ENCODE measurements at regions of chr6 and their contacts with region 1.

Region 1: DNA sequence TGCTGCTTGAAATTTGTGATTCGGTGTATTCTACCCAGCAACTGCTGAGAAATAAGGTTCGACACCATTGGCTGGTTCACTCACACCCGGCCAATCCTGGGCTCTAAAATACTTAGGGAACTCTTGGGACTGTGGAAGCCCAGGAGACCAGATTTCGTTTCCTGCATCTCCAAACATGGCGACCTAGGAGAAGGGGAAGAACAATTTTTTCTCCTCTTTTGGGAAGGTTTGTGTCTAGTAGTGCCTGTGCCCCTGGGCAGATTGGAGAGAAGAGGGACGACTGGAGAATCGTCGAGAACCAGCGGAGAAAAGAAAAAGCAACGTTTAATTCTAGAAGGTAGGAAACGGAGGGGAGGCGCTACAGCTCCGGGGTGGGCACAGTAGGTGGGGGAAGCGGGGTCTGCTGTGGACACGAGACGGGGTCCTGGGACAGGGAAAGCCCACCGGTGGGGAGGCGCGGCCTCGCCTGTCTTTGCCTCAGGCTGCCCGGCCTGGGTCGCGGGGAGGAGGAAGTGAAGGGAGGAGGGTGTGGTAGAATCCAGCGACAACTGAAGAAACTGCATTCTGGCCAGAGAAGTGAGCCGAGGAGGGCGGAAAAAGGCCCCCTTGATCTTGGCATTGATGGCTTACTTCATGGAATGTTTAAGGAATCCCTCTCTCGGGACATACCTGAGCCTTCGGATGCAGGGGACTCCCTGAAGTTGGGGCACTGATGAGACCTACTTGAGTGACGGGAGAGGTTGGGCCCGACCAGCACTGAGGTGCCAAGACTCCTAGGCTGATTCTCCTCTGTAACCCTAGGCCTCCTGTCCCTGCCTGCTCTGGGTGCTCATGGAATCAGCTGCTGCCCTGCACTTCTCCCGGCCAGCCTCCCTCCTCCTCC is at the start of gene BTN2A1:
- DNase-seq: peak in 8 of 9 donors; percentile 59 to 86 (median 78)
- ATAC-seq: peak; percentile 99
- H3K4me3 ChIP-seq: peak within 1 kb of the TSS; percentile 93
- H3K4me3 Mint-ChIP-seq: peak within 1 kb of the TSS; percentile 90 to 100 (median 98)
- H3K27ac ChIP-seq: peak within 1 kb of the TSS; percentile 81
- H3K27ac Mint-ChIP-seq: peak within 1 kb of the TSS; percentile 89 to 99 (median 94)
- H3K4me1 ChIP-seq: peaks cover 27 to 38% of the 10 kb centered on the region in 2 donors
- H3K4me1 Mint-ChIP-seq: peaks cover 43 to 75% (median 60%) of the 10 kb centered on the region in 7 donors
- H3K27me3 ChIP-seq: no peaks in the 10 kb centered on the region
- H3K27me3 Mint-ChIP-seq: no peaks in the 10 kb centered on the region
- total RNA-seq, gene BTN2A1: 29.0 to 54.6 (median 37.2) TPM

Region 2: DNA sequence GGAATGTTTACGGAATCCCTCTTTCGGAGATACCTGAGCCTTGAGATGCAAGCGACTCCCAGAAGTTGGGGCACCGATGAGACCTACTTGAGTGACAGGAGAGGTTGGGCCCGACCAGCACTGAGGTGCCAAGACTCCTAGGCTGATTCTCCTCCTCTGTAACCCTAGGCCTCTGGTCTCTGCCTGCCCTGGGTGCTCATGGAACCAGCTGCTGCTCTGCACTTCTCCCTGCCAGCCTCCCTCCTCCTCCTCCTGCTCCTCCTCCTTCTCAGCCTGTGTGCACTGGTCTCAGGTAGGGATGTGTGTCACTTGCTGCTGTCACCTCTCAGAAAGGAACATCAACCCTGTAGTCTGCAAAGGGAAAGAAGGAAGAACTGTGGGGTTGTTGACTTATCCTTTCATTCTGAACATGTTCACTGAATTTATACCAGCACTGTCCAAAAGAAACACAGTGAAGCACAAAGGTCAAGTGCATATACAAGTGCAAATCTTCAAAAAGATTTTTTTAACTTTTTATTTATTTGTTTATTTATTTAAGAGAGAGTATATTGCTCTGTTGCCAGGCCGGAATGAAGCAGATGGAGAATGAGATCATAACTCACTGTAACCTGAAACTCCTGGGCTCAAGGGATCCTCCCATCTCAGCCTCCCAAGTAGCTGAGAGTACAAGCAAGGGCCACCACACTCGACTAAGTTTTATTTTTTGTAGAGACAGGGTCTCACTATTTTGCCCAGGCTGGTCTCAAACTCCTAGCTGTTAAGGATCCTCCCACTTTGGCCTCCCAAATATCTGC is 74.2 kb before region 1 on chr6:
- CTCF ChIA-PET with region 1: no interaction called
- POLR2A ChIA-PET with region 1: no interaction called
- intact Hi-C with region 1: loop called in 1 of 2 experiments (anchors 5 kb)
- DNase-seq: peak in 1 of 9 donors; percentile 20
- ATAC-seq: peak; percentile 9
- H3K4me3 ChIP-seq: peak overlapping the region; percentile 83
- H3K4me3 Mint-ChIP-seq: peak overlapping the region; percentile 91 to 100 (median 98)
- H3K27ac ChIP-seq: peak overlapping the region; percentile 96
- H3K27ac Mint-ChIP-seq: peak overlapping the region; percentile 81 to 99 (median 95)
- H3K4me1 ChIP-seq: peaks cover 8 to 16% of the 10 kb centered on the region in 2 donors
- H3K4me1 Mint-ChIP-seq: peaks cover 17 to 57% (median 33%) of the 10 kb centered on the region in 7 donors
- H3K27me3 ChIP-seq: no peaks in the 10 kb centered on the region
- H3K27me3 Mint-ChIP-seq: no peaks in the 10 kb centered on the region

Region 3: DNA sequence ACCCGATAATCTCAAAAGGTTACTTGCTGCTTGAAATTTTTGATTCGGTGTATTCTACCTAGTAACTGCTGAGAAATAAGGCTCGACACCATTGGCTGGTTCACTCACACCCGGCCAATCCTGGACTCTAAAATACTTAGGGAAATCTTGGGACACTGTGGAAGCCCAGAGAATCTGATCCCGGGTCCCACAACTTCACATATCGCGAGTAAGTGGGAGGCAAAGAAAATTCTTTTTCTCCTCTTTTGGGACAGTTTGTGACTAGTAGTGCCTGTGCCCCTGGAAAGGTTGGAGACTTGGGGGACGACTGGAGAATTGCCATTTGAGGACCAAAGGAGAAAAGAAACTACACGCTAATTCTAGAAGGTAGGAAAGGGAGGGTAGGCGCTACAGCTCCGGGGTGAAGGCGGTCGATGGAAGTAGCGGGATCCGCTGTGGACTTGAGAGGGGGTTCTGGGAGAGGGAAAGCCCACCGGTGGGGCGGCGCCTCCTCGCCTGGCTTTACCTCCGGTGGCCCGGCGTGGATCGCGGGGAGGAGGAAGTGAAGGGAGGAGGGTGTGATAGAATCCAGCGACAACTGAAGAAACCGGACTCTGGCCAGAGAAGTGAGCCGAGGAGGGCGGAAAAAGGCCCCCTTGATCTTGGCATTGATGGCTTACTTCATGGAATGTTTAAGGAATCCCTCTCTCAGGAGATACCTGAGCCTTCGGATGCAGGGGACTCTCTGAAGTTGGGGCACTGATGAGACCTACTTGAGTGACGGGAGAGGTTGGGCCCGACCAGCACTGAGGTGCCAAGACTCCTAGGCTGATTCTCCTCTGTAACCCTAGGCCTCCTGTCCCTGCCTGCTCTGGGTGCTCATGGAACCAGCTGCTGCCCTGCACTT is 36.5 kb before region 1 on chr6:
- CTCF ChIA-PET with region 1: no interaction called
- POLR2A ChIA-PET with region 1: interaction called, 3 read pairs
- intact Hi-C with region 1: loop called in 1 of 2 experiments (anchors 1 kb)
- DNase-seq: peak; percentile 11 to 71 (median 62)
- ATAC-seq: peak; percentile 96
- H3K4me3 ChIP-seq: peak overlapping the region; percentile 79
- H3K4me3 Mint-ChIP-seq: no peak overlapping the region
- H3K27ac ChIP-seq: peak overlapping the region; percentile 71
- H3K27ac Mint-ChIP-seq: peak overlapping the region in 2 of 9 donors; percentile 43 to 79
- H3K4me1 ChIP-seq: peaks cover 5 to 9% of the 10 kb centered on the region in 2 donors
- H3K4me1 Mint-ChIP-seq: peaks cover 0 to 16% (median 3%) of the 10 kb centered on the region in 7 donors
- H3K27me3 ChIP-seq: no peaks in the 10 kb centered on the region
- H3K27me3 Mint-ChIP-seq: no peaks in the 10 kb centered on the region

Region 4: DNA sequence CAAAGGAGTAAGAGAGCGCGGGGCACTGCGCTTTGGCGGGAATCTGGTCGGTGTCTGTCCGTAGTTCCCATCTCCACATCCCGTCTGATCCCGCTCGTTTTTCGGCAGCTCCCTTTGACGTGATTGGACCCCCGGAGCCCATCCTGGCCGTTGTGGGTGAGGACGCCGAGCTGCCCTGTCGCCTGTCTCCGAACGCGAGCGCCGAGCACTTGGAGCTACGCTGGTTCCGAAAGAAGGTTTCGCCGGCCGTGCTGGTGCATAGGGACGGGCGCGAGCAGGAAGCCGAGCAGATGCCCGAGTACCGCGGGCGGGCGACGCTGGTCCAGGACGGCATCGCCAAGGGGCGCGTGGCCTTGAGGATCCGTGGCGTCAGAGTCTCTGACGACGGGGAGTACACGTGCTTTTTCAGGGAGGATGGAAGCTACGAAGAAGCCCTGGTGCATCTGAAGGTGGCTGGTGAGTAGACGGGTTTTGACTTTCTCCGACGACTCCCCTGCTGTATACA is 43.5 kb after region 1 on chr6:
- CTCF ChIA-PET with region 1: no interaction called
- POLR2A ChIA-PET with region 1: interaction called, 3 read pairs
- intact Hi-C with region 1: loop called in 1 of 2 experiments (anchors 2 kb)
- DNase-seq: peak in 8 of 9 donors; percentile 25 to 39 (median 33)
- ATAC-seq: peak; percentile 79
- H3K4me3 ChIP-seq: peak overlapping the region; percentile 51
- H3K4me3 Mint-ChIP-seq: peak overlapping the region; percentile 63 to 87 (median 84)
- H3K27ac ChIP-seq: no peak overlapping the region
- H3K27ac Mint-ChIP-seq: peak overlapping the region in 7 of 9 donors; percentile 5 to 41 (median 25)
- H3K4me1 ChIP-seq: peaks cover 10% of the 10 kb centered on the region in 2 donors
- H3K4me1 Mint-ChIP-seq: peaks cover 10 to 22% (median 17%) of the 10 kb centered on the region in 7 donors
- H3K27me3 ChIP-seq: peaks cover 13 to 15% of the 10 kb centered on the region in 2 donors
- H3K27me3 Mint-ChIP-seq: peaks cover 11 to 48% (median 27%) of the 10 kb centered on the region in 5 donors

Measured in naive thymus-derived CD4-positive, alpha-beta T cell (primary cell).